WTC11 (cell line): ENCODE measurements at regions of chr5 and their contacts with region 1.

Region 1: DNA sequence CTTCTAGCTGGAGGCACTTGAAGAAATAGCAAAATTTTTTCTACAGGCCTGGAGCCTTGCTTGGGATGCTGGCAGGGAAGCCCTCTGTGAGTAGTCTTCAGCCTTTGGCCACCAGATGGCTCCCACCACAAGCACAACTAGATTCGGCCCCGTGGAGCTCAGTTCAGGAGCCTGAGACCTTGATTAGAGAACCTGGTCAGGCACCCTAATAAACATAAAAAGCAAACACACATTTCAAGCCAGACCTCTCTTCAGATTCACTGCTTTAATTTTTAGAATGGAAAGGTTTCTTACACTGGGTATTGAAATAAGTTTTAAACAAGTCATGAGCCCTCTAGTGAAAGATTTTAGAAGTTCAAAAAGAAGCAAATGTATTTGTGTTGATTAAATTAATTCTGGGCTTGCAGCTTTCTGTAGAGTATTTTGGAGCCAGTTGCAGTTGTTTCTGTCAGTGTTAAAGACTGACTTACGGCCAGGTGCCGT is 41.4 kb downstream of the GLRX start:
- DNase-seq: peak; percentile 77
- ATAC-seq: peak; percentile 99
- H3K4me3 Mint-ChIP-seq: no peak overlapping the region
- H3K27ac Mint-ChIP-seq: no peak overlapping the region
- H3K4me1 Mint-ChIP-seq: peaks cover 7% of the 10 kb centered on the region; the same call in 1 of the 2 replicates
- H3K27me3 Mint-ChIP-seq: no peaks in the 10 kb centered on the region; the same call in 1 of the 2 replicates
- CTCF ChIP-seq: peak; percentile 25; the same call in 1 of the 2 replicates

Region 2: DNA sequence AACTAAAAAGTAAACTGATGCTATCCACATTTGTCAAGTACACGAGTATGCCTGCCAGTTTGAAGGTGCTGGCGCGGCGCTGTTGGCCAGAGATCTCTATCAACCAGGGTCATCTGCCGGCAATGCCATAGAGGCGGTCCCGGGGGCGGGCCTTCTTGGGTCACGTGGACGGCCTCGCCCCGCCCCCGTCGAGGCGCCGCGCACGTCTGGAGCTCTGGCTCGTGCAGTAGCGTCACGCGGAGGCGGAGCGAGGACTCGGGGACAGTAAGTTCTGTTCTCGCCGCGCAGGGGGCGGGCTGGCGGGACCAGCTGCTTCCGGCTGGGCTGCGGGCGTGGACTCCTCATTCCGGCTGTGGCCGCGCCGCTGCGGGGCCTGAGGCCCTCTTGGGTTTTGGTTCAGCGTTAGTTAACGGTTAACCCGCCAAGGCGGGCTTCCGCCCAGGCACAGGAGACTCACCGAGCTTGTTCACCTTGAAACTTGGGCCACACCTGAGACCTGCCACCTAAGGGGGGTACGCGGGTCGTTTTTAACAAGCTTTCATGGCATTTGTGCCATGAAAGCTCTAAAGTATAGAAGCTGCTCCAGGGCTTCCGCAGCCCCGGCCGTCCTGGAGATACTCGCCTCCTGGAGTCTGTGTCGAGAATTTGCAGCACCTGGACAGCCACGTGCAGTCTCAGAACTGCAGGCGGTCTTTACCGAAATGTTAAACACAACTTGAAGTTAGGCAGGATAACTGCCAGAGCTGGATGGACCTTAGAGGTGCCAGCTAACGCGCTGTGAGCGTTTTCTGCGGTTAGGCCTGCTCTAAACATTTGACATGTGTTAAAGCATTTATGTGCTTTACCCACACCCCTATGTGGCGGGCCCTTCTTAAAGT is 134.3 kb before region 1 on chr5 and contains the start of gene RFESD:
- CTCF ChIA-PET with region 1: interaction called, 24 read pairs
- POLR2A ChIA-PET with region 1: no interaction called
- DNase-seq: peak; percentile 97
- ATAC-seq: peak; percentile 94
- H3K4me3 Mint-ChIP-seq: peak within 1 kb of the TSS; percentile 71
- H3K27ac Mint-ChIP-seq: peak within 1 kb of the TSS; percentile 57; the same call in 1 of the 2 replicates
- H3K4me1 Mint-ChIP-seq: 0 out of 2 replicates have a peak, but pooled peaks cover 7% of the 10 kb centered on the region
- H3K27me3 Mint-ChIP-seq: no peaks in the 10 kb centered on the region
- CTCF ChIP-seq: no peak
- total RNA-seq, gene RFESD: 2.7 to 5.7 TPM (median 4.5 TPM) in 3 replicates

Region 3: GRCh38 chr5:95770830-95771708 is 10.1 kb before region 1 on chr5:
- CTCF ChIA-PET with region 1: interaction called, 27 read pairs
- POLR2A ChIA-PET with region 1: no interaction called
- DNase-seq: no peak
- ATAC-seq: no peak
- H3K4me3 Mint-ChIP-seq: no peak overlapping the region
- H3K27ac Mint-ChIP-seq: no peak overlapping the region
- H3K4me1 Mint-ChIP-seq: no peaks in the 10 kb centered on the region
- H3K27me3 Mint-ChIP-seq: no peaks in the 10 kb centered on the region
- CTCF ChIP-seq: no peak

Region 4: GRCh38 chr5:95808686-95809413 is 27.7 kb after region 1 on chr5:
- CTCF ChIA-PET with region 1: interaction called, 12 read pairs
- POLR2A ChIA-PET with region 1: no interaction called
- DNase-seq: no peak
- ATAC-seq: peak; percentile 58
- H3K4me3 Mint-ChIP-seq: no peak overlapping the region
- H3K27ac Mint-ChIP-seq: no peak overlapping the region
- H3K4me1 Mint-ChIP-seq: peaks cover 46% of the 10 kb centered on the region
- H3K27me3 Mint-ChIP-seq: no peaks in the 10 kb centered on the region
- CTCF ChIP-seq: no peak

Region 5: GRCh38 chr5:95835682-95836385 is 54.7 kb after region 1 on chr5:
- CTCF ChIA-PET with region 1: interaction called, 25 read pairs
- POLR2A ChIA-PET with region 1: interaction called, 6 read pairs
- DNase-seq: no peak
- ATAC-seq: no peak
- H3K4me3 Mint-ChIP-seq: no peak overlapping the region; the same call in 1 of the 2 replicates
- H3K27ac Mint-ChIP-seq: no peak overlapping the region
- H3K4me1 Mint-ChIP-seq: peaks cover 10% of the 10 kb centered on the region
- H3K27me3 Mint-ChIP-seq: no peaks in the 10 kb centered on the region; the same call in 1 of the 2 replicates
- CTCF ChIP-seq: no peak